CD4-positive, alpha-beta T cell (primary cell): ENCODE measurements at regions of chr12 and their contacts with region 1.

Region 1: DNA sequence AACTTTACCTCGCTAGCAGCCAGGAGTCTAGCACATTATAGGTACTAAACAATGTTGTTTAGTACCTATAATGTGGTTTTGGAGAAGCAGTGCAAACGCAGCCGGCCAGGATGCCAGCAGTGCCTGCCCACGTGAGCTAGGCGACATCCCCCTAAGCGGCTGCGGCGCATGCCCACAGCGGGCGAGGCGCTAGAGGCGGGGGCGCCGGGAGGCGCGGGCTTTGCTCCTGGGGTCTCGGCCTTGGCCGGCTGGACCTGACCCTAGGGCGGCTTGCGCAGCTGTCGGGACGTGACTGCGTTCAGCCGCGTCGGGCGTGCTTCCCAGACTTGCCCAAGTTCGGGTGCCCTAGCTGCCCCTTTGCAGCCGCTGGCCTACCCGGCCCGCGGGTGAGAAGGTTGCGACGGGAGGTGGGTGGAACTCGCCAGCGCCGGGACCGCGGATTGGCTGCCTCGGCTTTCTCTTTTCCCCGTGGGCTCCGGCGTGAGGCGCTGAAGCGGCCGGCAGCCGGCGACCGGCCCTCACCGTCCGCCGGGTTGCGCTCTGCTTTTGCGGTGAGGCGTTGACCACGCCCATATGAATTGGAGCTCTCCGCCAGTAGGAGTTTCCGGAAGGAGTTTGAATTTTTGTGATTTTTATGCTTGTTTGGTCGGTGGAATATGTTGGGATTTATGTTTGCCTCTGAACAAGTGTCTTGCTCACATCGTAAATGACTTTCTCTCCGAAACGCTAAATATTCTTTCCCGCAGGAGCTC is at the start of gene TMEM19:
- DNase-seq: peak; percentile 64 to 91 (median 79)
- ATAC-seq: peak; percentile 90
- H3K4me3 ChIP-seq: peak within 1 kb of the TSS; percentile 77
- H3K4me3 Mint-ChIP-seq: peak within 1 kb of the TSS; percentile 92
- H3K27ac ChIP-seq: peak within 1 kb of the TSS; percentile 69 to 78
- H3K27ac Mint-ChIP-seq: peak within 1 kb of the TSS; percentile 87
- H3K4me1 ChIP-seq: peaks cover 20% of the 10 kb centered on the region
- H3K4me1 Mint-ChIP-seq: peaks cover 47% of the 10 kb centered on the region
- H3K27me3 ChIP-seq: no peaks in the 10 kb centered on the region
- H3K27me3 Mint-ChIP-seq: no peaks in the 10 kb centered on the region
- CTCF ChIP-seq: no peak
- total RNA-seq, gene TMEM19: 8.9 to 11.6 TPM

Region 2: DNA sequence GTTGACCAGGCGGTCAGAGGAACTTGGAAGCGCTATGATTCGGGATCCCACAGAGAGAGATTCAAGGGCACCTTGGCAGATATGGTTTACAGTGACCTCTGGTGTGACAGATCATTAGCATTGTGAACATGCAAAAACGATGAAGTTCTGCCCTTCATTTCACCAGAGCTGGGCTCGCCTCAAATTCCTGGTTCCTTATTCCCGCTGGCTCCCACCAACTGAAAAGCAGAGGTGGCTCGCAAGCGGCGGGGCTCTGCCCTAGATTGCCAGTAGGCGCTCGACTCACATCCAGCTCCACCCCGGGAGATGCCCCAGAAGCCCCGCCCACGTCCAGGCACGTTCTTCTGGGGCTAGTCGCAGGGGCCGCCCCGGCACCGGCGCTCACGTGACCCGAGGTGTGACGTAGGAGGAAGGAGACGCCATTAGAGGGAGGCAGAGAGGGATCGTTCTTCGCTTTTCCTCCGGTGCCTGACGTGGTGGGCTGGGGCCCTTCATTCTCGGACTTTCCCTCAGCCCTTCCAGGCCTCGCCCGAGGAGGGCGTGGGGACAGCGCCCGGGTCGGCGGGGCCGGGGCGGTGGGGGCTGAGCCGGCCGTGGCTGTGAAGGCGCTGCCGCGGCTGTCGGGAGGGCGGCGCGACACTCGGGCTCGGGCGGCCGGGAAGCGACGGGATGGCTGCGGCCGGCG is 68.5 kb after region 1 on chr12 and contains the start of gene RAB21:
- CTCF ChIA-PET with region 1: interaction called, 3 read pairs
- POLR2A ChIA-PET with region 1: interaction called, 48 read pairs
- intact Hi-C with region 1: loop called in 1 of 2 experiments (anchors 5 kb)
- DNase-seq: peak; percentile 96 to 99 (median 98)
- ATAC-seq: peak; percentile 91
- H3K4me3 ChIP-seq: peak within 1 kb of the TSS; percentile 99
- H3K4me3 Mint-ChIP-seq: peak within 1 kb of the TSS; percentile 100
- H3K27ac ChIP-seq: peak within 1 kb of the TSS; percentile 84 to 97
- H3K27ac Mint-ChIP-seq: peak within 1 kb of the TSS; percentile 99
- H3K4me1 ChIP-seq: peaks cover 30% of the 10 kb centered on the region
- H3K4me1 Mint-ChIP-seq: peaks cover 46% of the 10 kb centered on the region
- H3K27me3 ChIP-seq: no peaks in the 10 kb centered on the region
- H3K27me3 Mint-ChIP-seq: peaks cover 26% of the 10 kb centered on the region
- CTCF ChIP-seq: peak; percentile 28
- total RNA-seq, gene RAB21: 106 to 108 TPM